OCI-LY7 (cell line): ENCODE measurements at regions of chr1 and their contacts with region 1.

Region 1: GRCh38 chr1:108746372-108747205 is at the start of gene STXBP3:
- DNase-seq: peak; percentile 99
- H3K4me3 ChIP-seq: peak within 1 kb of the TSS; percentile 88
- H3K27ac ChIP-seq: peak within 1 kb of the TSS; percentile 56
- H3K4me1 ChIP-seq: peaks cover 3% of the 10 kb centered on the region
- CTCF ChIP-seq: peak; percentile 93
- total RNA-seq, gene STXBP3: 27.7 and 28.3 TPM in 2 replicates

Region 2: DNA sequence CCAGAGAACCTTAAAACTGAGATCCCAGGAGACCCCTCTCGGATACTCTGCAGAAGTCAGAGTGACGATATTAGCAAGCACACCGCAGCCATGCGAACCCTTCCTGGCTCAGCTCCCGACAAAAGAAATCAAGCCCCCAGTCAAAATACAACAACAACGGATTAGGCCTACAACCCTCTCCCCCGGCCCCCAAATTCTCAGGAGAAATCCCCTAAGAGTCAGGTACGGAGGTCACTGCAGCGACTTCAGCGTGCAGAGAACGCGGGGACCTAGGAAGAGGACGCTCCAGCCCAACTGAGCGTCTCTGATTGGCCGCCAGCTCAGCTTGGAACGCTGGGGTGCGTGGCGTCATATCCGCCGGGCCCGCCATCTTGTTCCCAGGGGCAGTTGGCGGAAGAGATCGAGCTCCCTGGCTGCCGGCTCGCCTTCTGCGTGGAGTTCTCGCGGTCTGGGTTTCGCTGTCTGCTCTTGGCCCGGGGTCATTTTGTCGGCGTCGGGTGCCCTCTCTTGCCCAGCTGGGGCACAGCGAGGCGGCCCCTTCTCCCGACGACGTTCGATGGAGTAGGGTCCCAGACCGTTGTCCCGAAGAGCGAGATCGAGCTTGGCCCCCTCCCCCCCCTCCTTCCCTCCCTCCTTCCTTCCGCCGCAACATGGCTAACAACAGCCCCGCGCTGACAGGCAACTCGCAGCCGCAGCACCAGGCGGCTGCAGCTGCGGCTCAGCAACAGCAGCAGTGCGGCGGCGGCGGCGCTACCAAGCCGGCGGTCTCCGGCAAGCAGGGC is 54.5 kb before region 1 on chr1 and contains the start of gene PRPF38B:
- CTCF ChIA-PET with region 1: no interaction called
- POLR2A ChIA-PET with region 1: interaction called, 3 read pairs
- intact Hi-C with region 1: loop called (anchors 1 kb)
- DNase-seq: peak; percentile 94
- H3K4me3 ChIP-seq: peak within 1 kb of the TSS; percentile 97
- H3K27ac ChIP-seq: peak within 1 kb of the TSS; percentile 83
- H3K4me1 ChIP-seq: peaks cover 28% of the 10 kb centered on the region
- CTCF ChIP-seq: no peak
- total RNA-seq, gene PRPF38B: 37.7 and 47.4 TPM in 2 replicates